H1 (cell line): ENCODE measurements at regions of chr1 and their contacts with region 1.

Region 1: GRCh38 chr1:31548907-31549808 is 27.2 kb upstream of the TINAGL1 start:
- DNase-seq: peak; percentile 59 to 98
- H3K4me3 ChIP-seq: peak overlapping the region; percentile 34 to 79 (median 64); a peak in 7 of 8 replicates
- H3K27ac ChIP-seq: no peak overlapping the region
- H3K4me1 ChIP-seq: peaks cover 0 to 11% (median 5%) of the 10 kb centered on the region in 4 experiments; a peak in 5 of 7 replicates
- H3K27me3 ChIP-seq: no peaks in the 10 kb centered on the region
- CTCF ChIP-seq: peak; percentile 91 to 95 (median 92)
- EP300 ChIP-seq: no peak; a peak in 1 of 3 replicates
- POLR2A ChIP-seq: peak in 1 of 2 experiments; percentile 71; a peak in 2 of 3 replicates
- RAD21 ChIP-seq: peak; percentile 91 to 96

Region 2: DNA sequence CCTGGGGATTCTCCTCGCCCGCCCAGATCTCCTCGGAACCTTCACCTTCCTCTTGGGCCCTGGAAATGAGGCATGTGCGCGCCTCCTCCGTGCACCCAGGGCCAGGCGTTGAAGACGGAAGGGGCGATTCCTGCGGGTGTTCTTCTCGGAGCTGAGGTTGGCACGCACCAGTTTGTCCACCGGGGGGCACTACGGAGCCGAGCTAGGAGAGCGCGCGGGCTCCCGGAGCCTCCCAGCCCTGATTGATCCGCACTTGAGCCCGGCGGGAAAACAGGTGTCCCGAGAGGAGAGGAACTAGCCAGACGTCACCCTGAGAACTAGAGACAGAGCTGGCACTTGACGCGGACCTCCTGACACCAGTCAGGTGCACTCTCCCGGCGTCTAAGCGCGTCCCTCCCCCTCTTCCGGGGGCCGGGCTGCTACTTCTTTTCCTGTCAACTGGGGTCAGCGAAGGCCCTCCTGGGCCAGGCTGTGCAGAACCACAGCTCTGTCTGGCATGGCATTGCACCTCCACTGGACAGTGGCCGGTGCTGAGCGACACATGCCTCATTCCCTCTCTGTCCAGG is 154.4 kb before region 1 on chr1:
- CTCF ChIA-PET with region 1: interaction called, 47 read pairs
- POLR2A ChIA-PET with region 1: interaction called, 8 read pairs
- DNase-seq: peak; percentile 79 to 98
- H3K4me3 ChIP-seq: peak overlapping the region in 3 of 4 experiments; percentile 34 to 51 (median 47); a peak in 6 of 8 replicates
- H3K27ac ChIP-seq: no peak overlapping the region
- H3K4me1 ChIP-seq: peaks cover 0 to 4% (median 3%) of the 10 kb centered on the region in 4 experiments; a peak in 4 of 7 replicates
- H3K27me3 ChIP-seq: no peaks in the 10 kb centered on the region
- CTCF ChIP-seq: peak; percentile 85 to 93 (median 92)
- EP300 ChIP-seq: no peak
- POLR2A ChIP-seq: no peak
- RAD21 ChIP-seq: peak; percentile 82 to 86

Region 3: DNA sequence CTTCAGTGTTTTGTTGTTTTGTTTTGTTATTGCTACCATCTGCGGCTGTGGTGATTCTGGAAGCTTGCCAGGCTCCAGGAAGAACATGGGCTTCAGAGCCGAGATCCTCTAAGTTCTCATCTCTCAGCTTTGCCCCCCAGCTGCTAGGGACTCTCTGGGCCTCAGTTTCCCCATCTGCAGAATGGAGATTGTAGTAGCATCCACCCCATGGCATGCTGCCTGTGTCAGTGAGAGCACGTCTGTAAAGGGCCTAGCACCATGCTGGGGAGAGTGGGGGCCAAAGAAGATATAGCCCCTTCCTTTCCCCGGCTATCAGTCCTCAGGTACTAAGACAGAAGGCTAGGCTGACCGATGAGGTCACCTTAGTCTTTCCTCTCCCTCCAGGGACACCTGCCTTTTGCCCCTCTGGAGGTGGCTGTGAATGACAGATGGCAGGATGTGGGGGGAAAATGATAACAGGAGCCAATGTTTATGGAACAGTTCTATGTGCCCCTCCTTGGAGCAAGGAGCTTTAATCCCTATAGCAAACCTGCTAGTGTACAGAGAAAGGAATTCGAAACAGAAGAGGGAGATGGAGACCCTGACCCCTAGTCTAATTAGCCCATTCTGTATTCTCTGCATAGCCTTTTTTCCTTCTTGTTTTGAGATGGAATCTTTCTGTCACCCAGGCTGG is 108.2 kb before region 1 on chr1:
- CTCF ChIA-PET with region 1: interaction called, 13 read pairs
- POLR2A ChIA-PET with region 1: interaction called, 3 read pairs
- DNase-seq: no peak
- H3K4me3 ChIP-seq: no peak overlapping the region
- H3K27ac ChIP-seq: no peak overlapping the region
- H3K4me1 ChIP-seq: no peaks in the 10 kb centered on the region; a peak in 2 of 7 replicates
- H3K27me3 ChIP-seq: no peaks in the 10 kb centered on the region
- CTCF ChIP-seq: no peak
- EP300 ChIP-seq: no peak
- POLR2A ChIP-seq: no peak
- RAD21 ChIP-seq: no peak

Region 4: DNA sequence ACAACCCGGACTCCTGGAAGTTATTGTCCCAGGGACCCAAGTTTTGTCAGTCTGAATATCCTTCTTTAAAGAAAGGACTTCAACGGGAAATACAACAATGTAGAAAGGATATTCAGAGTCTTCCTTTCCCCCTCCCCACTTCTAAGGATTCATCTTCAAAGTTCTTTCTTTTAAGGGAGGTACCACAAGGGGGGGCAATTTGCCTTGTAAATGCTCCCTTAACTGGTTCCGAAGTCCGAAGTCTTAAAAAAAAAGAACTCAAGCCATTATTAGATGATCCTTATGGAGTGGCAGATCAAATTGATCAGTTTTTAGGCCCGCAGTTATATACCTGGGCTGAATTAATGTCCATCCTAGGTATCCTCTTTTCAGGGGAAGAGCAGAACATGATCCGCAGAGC is 89.1 kb before region 1 on chr1:
- CTCF ChIA-PET with region 1: interaction called, 77 read pairs
- POLR2A ChIA-PET with region 1: interaction called, 5 read pairs
- DNase-seq: no peak
- H3K4me3 ChIP-seq: no peak overlapping the region
- H3K27ac ChIP-seq: no peak overlapping the region
- H3K4me1 ChIP-seq: peaks cover 0 to 5% (median 0%) of the 10 kb centered on the region in 4 experiments; a peak in 2 of 7 replicates
- H3K27me3 ChIP-seq: no peaks in the 10 kb centered on the region; a peak in 1 of 7 replicates
- CTCF ChIP-seq: peak in 2 of 3 experiments; percentile 43 to 51; a peak in 2 of 4 replicates
- EP300 ChIP-seq: no peak
- POLR2A ChIP-seq: no peak
- RAD21 ChIP-seq: peak; percentile 66 to 73

Region 5: DNA sequence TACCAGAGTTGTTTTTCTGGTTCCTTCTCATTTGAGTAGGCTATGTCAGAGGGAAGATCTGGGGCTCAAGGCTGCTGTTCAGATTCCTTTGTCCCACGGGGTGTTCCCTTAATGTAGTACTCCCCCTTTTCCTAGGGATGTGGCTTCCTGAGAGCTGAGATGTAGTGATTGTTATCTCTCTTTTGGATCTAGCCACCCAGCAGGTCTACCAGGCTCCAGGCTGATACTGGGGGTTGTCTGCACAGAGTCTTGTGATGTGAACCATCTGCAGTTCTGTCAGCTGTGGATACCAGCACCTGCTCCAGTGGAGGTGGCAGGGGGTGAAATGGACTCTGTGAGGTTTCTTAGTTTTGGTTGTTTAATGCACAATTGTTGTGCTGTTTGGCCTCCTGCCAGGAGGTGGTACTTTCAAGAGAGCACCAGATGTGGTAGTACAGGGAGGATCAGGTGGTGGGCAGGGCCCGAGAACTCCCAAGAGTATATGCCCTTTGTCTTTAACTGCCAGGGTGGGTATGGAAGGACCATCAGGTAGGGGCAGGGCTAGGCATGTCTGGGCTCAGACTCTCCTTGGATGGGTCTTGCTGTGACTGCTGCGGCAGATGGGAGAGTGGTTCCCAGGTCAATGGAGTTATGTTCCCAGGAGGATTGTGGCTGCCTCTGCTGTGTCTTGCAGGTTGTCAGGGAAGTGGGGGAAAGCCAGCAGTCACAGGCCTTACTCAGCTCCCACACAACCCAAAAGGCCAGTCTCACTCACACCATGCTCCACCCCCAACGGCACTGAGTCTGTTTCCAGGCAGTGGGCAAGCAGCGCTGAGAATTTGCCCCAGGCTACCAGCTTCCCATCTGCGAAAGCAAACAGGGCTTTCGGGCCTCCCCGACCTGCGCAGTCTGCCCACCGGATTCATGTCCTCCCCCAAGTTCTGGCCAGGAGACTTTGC is 72.0 kb before region 1 on chr1:
- CTCF ChIA-PET with region 1: interaction called, 12 read pairs
- POLR2A ChIA-PET with region 1: no interaction called
- DNase-seq: no peak
- H3K4me3 ChIP-seq: no peak overlapping the region
- H3K27ac ChIP-seq: no peak overlapping the region
- H3K4me1 ChIP-seq: peaks cover 0 to 3% (median 0%) of the 10 kb centered on the region in 4 experiments; a peak in 2 of 7 replicates
- H3K27me3 ChIP-seq: no peaks in the 10 kb centered on the region
- CTCF ChIP-seq: no peak
- EP300 ChIP-seq: no peak
- POLR2A ChIP-seq: no peak
- RAD21 ChIP-seq: no peak

Region 6: DNA sequence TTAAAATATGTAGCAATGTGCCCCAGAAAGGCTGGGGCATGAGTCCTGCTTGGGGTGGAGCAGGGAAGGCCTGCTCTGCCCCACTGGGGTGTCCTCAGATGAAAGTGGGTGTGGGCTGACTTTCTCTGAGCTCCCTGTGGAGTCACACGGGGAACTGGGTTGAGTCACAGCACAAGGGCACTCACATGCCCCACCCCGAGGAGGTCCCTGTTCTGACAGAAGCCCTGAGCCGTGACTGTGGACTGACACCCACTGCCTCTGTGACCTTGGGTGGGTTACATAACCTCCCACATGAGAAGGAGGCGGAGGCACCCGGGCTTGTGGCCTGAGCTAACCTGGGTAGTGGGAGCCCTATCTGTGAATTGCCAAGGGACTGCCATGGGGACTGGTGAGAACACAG is 25.4 kb before region 1 on chr1:
- CTCF ChIA-PET with region 1: interaction called, 12 read pairs
- POLR2A ChIA-PET with region 1: interaction called, 4 read pairs
- DNase-seq: no peak
- H3K4me3 ChIP-seq: no peak overlapping the region
- H3K27ac ChIP-seq: no peak overlapping the region
- H3K4me1 ChIP-seq: no peaks in the 10 kb centered on the region
- H3K27me3 ChIP-seq: no peaks in the 10 kb centered on the region
- CTCF ChIP-seq: no peak
- EP300 ChIP-seq: no peak
- POLR2A ChIP-seq: no peak
- RAD21 ChIP-seq: no peak

Region 7: DNA sequence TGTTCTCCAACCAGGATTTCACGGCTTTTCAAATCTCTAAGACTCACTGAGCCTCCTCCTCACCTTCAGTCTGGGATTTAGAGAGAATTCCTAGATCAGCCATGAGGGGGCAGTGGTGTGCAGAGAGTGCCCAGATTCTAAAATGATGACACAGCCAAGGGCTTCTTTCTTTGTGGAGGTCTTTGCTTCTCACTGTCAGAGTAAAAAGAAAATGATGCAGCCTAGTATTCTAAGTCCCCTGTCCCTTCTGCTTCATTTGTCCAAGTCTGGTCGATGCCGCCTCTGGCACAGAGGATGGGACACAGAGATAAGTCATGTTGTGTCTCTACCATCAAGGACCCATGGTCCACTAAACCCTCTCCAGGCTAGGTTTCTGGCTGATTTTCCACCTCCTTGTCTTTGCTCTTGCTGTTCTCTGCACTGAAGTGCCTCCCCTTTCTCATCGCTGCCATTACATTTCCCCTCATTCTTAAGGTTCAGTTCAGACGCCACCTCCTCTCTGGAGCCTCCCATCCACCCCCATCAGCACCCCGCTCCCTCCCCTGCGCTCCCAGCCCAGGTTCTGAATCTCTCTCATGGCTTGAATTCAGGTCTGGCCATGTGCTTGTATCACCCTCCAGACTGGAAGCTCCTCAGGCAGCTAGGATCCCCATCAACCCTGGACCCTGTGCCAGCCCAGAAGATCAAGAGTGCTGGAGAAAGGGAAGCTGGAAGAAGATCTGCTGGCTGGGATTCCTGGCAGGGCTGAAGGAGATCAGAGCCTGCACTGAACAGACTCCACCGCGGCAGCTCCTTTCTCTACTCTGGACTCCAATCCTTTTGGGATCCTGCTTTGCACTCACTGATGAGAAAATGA is 15.2 kb after region 1 on chr1:
- CTCF ChIA-PET with region 1: interaction called, 21 read pairs
- POLR2A ChIA-PET with region 1: interaction called, 6 read pairs
- DNase-seq: peak in 1 of 2 experiments; percentile 94
- H3K4me3 ChIP-seq: no peak overlapping the region
- H3K27ac ChIP-seq: no peak overlapping the region
- H3K4me1 ChIP-seq: peaks cover 0 to 9% (median 6%) of the 10 kb centered on the region in 4 experiments; a peak in 5 of 7 replicates
- H3K27me3 ChIP-seq: no peaks in the 10 kb centered on the region
- CTCF ChIP-seq: peak; percentile 23 to 83 (median 80)
- EP300 ChIP-seq: no peak
- POLR2A ChIP-seq: no peak
- RAD21 ChIP-seq: peak; percentile 89 to 91